IMR-90 (cell line): ENCODE measurements at regions of chr6 and their contacts with region 1.

Region 1: GRCh38 chr6:48057601-48058000 is 53.4 kb downstream of the PTCHD4 start:
- DNase-seq: no peak
- ATAC-seq: no peak
- H3K4me3 ChIP-seq: no peak overlapping the region
- H3K27ac ChIP-seq: no peak overlapping the region
- H3K4me1 ChIP-seq: no peaks in the 10 kb centered on the region
- H3K27me3 ChIP-seq: no peaks in the 10 kb centered on the region
- CTCF ChIP-seq: no peak
- POLR2A ChIP-seq: no peak
- RAD21 ChIP-seq: no peak

Region 2: DNA sequence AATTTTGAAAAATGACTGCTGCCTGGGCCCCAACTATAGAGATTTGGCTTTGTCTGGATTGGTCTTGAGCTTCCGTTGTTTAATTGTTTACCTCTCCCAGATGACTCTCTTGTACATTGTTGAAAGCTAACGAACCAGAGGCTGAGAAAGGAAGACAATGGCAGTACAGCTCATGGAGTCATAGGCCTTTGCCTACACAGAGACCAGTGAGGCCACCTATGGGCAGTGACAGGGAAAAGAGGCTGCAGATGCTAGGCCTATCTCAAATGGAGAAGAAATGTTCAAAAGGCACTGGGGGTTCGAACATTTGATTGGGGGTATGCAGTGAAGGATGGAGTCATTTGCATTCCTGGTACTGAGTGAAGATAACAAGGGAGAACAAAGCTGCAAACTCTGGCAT is 246.7 kb before region 1 on chr6:
- CTCF ChIA-PET with region 1: no interaction called
- POLR2A ChIA-PET with region 1: no interaction called
- dilution Hi-C with region 1: no loop called
- in situ Hi-C with region 1: no loop called
- intact Hi-C with region 1: loop called (anchors 10 kb)
- DNase-seq: no peak
- ATAC-seq: no peak
- H3K4me3 ChIP-seq: no peak overlapping the region
- H3K27ac ChIP-seq: no peak overlapping the region
- H3K4me1 ChIP-seq: no peaks in the 10 kb centered on the region
- H3K27me3 ChIP-seq: no peaks in the 10 kb centered on the region
- CTCF ChIP-seq: no peak
- POLR2A ChIP-seq: no peak
- RAD21 ChIP-seq: no peak

Region 3: GRCh38 chr6:48073976-48074767 is 16.6 kb after region 1 on chr6:
- CTCF ChIA-PET with region 1: no interaction called
- POLR2A ChIA-PET with region 1: no interaction called
- dilution Hi-C with region 1: no loop called
- in situ Hi-C with region 1: no loop called
- intact Hi-C with region 1: no loop called
- DNase-seq: no peak
- ATAC-seq: no peak
- H3K4me3 ChIP-seq: no peak overlapping the region
- H3K27ac ChIP-seq: no peak overlapping the region
- H3K4me1 ChIP-seq: no peaks in the 10 kb centered on the region; the same call in 1 of the 2 replicates
- H3K27me3 ChIP-seq: peaks cover 3% of the 10 kb centered on the region; the same call in 1 of the 2 replicates
- CTCF ChIP-seq: no peak
- POLR2A ChIP-seq: no peak
- RAD21 ChIP-seq: no peak

Region 4: GRCh38 chr6:48135342-48136084 is 77.9 kb after region 1 on chr6:
- CTCF ChIA-PET with region 1: no interaction called
- POLR2A ChIA-PET with region 1: no interaction called
- dilution Hi-C with region 1: no loop called
- in situ Hi-C with region 1: no loop called
- intact Hi-C with region 1: no loop called
- DNase-seq: peak; percentile 4
- ATAC-seq: peak; percentile 77
- H3K4me3 ChIP-seq: no peak overlapping the region
- H3K27ac ChIP-seq: no peak overlapping the region
- H3K4me1 ChIP-seq: no peaks in the 10 kb centered on the region
- H3K27me3 ChIP-seq: no peaks in the 10 kb centered on the region
- CTCF ChIP-seq: no peak
- POLR2A ChIP-seq: no peak
- RAD21 ChIP-seq: no peak